ENCODE measurements at regions of chr20 and their contacts with region 1.

Region 1: DNA sequence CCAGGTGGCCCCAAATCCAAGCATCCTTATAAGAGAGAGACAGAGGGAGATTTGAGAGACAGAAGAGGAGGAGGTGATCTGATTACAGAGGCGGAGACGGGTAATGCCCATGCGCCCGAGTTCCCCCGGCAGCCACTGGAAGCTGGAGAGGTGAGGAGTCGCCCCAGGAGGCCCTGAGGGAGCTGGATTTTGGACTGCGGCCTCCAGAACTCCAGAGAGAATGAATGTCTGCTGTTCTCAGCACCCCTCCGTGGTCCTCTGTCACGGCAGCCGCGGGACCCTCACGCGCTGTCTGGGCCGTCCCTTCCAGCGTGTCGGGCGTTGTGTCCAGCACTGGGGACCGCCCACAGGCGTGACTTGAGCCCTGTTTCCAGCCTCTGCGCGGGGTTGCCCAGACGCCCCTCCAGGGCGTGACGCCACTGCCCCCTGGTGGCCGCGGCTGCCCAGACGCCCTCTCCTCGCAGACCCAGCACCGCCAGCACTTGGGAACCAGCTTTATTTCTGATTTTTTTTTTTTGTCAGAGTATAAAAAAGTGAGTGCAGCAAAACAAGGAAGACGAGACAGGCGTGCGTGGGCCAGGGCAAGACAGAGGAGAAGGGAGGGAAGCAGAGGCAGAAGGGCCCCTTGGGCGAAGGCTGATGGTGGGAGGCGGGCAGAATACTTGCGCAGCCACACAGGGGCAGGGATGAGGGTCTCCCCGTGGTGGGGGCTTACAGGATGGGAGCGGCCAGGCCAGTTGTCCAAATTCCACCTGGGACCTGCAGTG is 4.1 kb upstream of the ZNF512B start:
- DNase-seq: peak in 1 of 2 experiments; percentile 98
- H3K4me3 ChIP-seq: peak overlapping the region; percentile 18 to 61 (median 52); a peak in 7 of 8 replicates
- H3K27ac ChIP-seq: no peak overlapping the region
- H3K4me1 ChIP-seq: peaks cover 0 to 14% (median 8%) of the 10 kb centered on the region in 4 experiments; a peak in 6 of 7 replicates
- H3K27me3 ChIP-seq: peaks cover 0 to 12% (median 2%) of the 10 kb centered on the region in 4 experiments; a peak in 2 of 7 replicates
- CTCF ChIP-seq: peak; percentile 88 to 93 (median 89)
- EP300 ChIP-seq: no peak
- POLR2A ChIP-seq: no peak
- RAD21 ChIP-seq: peak; percentile 93 to 95

Region 2: GRCh38 chr20:63894358-63895201 is 79.2 kb before region 1 on chr20 and contains the start of gene DNAJC5:
- CTCF ChIA-PET with region 1: interaction called, 12 read pairs
- POLR2A ChIA-PET with region 1: no interaction called
- DNase-seq: peak; percentile 78 to 99
- H3K4me3 ChIP-seq: peak within 1 kb of the TSS; percentile 57 to 85 (median 60)
- H3K27ac ChIP-seq: no peak within 1 kb of the TSS
- H3K4me1 ChIP-seq: peaks cover 0 to 6% (median 4%) of the 10 kb centered on the region in 4 experiments; a peak in 4 of 7 replicates
- H3K27me3 ChIP-seq: no peaks in the 10 kb centered on the region
- CTCF ChIP-seq: no peak
- EP300 ChIP-seq: no peak; a peak in 1 of 3 replicates
- POLR2A ChIP-seq: peak in 1 of 2 experiments; percentile 45; a peak in 1 of 3 replicates
- RAD21 ChIP-seq: no peak
- total RNA-seq, gene DNAJC5: 31.2 and 32.8 TPM in 2 replicates

Region 3: DNA sequence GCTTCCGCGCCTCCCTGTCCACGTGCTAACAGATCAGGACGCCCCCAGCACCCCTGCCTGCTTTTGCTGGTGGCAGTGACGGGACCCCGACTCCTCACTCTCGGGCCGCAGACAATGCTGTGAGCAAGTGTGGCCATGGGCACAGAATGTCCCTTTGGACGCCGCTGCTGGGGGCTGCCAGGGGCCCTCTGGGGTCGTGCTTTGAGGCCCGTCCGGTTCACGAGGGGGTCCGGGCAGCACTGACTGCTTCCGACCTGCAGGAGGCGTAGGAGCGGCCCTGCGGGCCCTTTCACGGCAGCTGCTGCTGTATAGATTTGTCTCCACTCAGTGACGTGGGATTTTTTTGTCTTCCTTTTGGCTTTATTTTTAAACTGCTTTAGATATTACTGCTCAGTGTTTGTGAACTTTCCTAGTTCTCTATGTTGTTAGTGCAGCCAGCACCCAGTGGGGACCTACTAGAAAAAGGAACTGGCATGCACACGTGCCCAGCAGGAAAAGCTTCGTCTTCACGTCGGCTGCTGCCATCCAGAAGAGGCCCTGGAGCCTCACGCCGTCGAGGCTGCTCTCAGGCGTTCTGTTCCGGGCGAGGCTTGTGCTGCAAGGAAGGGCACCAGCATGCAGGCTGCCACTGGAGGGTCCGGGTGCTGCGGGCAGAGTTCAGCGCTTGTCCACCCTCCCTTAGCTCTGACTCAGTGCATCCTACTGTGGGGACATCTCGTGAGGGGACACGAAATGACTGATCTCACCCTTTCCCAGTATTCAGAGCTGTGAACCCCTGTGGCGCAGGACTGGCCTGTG is 39.3 kb before region 1 on chr20:
- CTCF ChIA-PET with region 1: interaction called, 58 read pairs
- POLR2A ChIA-PET with region 1: interaction called, 6 read pairs
- DNase-seq: peak in 1 of 2 experiments; percentile 80
- H3K4me3 ChIP-seq: no peak overlapping the region
- H3K27ac ChIP-seq: no peak overlapping the region
- H3K4me1 ChIP-seq: peaks cover 0 to 6% (median under 1%) of the 10 kb centered on the region in 4 experiments; a peak in 3 of 7 replicates
- H3K27me3 ChIP-seq: no peaks in the 10 kb centered on the region
- CTCF ChIP-seq: peak; percentile 61 to 79 (median 76)
- EP300 ChIP-seq: no peak
- POLR2A ChIP-seq: no peak
- RAD21 ChIP-seq: peak; percentile 42 to 52; a peak in 3 of 4 replicates

Region 4: DNA sequence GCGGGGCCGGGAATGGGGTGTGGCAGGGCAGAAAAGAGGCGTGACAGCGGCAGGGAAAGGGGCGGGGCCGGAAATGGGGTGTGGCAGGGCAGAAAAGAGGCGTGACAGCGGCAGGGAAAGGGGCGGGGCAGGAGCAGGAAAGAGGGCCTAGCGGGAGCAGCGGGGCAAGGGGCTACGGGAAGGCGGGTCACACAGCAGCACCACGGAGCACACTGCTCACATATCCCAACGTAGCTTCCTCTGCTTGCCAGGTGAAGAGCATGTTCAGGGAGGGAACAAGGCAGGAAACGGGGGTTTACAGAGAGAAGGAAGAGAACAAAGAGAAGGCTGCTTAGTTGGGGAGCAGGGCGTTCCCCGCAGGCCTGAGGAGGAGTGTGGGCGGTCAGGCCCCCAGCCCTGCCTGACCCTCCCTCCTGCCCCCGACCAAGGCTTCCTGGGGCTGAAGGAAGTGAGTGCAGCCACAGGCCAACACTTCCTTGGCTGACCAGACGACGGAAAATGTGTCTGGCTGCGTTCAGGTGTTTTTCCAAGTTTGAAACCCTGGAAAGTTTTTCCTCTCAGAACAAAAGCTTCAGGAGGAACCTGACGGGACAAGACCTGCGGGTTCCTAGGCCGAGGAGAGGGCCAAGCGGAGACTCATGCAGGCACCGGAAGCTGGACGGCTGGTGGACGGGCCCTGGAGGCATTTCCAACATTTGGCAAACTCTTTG is 31.4 kb before region 1 on chr20:
- CTCF ChIA-PET with region 1: interaction called, 58 read pairs
- POLR2A ChIA-PET with region 1: interaction called, 8 read pairs
- DNase-seq: peak; percentile 78 to 88
- H3K4me3 ChIP-seq: peak overlapping the region in 2 of 4 experiments; percentile 0 to 42; a peak in 5 of 8 replicates
- H3K27ac ChIP-seq: no peak overlapping the region
- H3K4me1 ChIP-seq: peaks cover 0 to 28% (median 13%) of the 10 kb centered on the region in 4 experiments; a peak in 6 of 7 replicates
- H3K27me3 ChIP-seq: no peaks in the 10 kb centered on the region
- CTCF ChIP-seq: no peak
- EP300 ChIP-seq: no peak
- POLR2A ChIP-seq: no peak
- RAD21 ChIP-seq: no peak

Region 5: DNA sequence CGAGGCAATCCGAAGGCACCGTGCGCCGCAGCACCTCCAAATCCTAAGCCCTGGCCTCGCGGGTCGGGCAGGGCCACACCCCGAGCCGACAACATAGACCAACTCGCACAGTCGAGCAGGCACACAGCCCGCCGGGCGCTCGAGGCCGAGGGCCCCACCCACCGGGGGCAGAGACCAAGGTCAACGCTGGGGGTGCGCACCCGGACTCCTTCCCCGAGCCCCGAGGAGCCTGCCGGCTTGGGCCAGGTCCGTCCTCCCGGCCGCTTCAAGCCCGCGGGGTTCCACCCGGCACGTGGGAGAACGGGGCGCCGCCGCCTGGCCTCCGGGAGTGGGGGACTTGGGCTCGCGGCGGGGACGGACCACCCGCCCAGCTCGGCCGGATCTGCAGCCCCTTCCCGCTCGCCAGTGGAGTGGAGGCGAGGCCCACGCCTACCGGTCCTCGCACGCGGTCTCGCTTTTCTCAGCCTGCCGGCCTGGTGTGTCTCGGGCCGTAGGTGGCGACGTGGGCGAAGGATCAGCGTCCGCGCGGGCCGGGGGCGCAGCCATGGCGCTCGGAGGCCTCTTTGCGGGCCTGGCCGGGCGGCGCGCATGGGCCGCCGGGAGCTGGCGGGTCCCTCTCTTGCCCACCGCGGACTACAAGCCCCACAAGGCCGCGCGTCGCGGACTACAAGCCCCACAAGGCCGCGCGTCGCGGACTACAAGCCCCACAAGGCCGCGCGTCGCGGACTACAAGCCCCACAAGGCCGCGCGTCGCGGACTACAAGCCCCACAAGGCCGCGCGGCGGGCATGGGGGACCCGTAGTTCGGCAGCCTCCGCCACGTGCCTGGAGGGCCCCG is 17.8 kb before region 1 on chr20 and contains the start of gene UCKL1:
- CTCF ChIA-PET with region 1: interaction called, 14 read pairs
- POLR2A ChIA-PET with region 1: interaction called, 11 read pairs
- DNase-seq: peak in 1 of 2 experiments; percentile 91
- H3K4me3 ChIP-seq: peak within 1 kb of the TSS; percentile 94 to 98 (median 96)
- H3K27ac ChIP-seq: peak within 1 kb of the TSS; percentile 69
- H3K4me1 ChIP-seq: peaks cover 0 to 19% (median 12%) of the 10 kb centered on the region in 4 experiments; a peak in 6 of 7 replicates
- H3K27me3 ChIP-seq: no peaks in the 10 kb centered on the region
- CTCF ChIP-seq: no peak
- EP300 ChIP-seq: no peak
- POLR2A ChIP-seq: peak in 1 of 2 experiments; percentile 84; a peak in 1 of 3 replicates
- RAD21 ChIP-seq: no peak
- total RNA-seq, gene UCKL1: 36.5 and 37.4 TPM in 2 replicates

Region 6: GRCh38 chr20:63962426-63963347 is 11.1 kb before region 1 on chr20:
- CTCF ChIA-PET with region 1: interaction called, 13 read pairs
- POLR2A ChIA-PET with region 1: interaction called, 11 read pairs
- DNase-seq: no peak
- H3K4me3 ChIP-seq: no peak overlapping the region
- H3K27ac ChIP-seq: no peak overlapping the region
- H3K4me1 ChIP-seq: peaks cover 0 to 19% (median 12%) of the 10 kb centered on the region in 4 experiments; a peak in 6 of 7 replicates
- H3K27me3 ChIP-seq: no peaks in the 10 kb centered on the region
- CTCF ChIP-seq: no peak
- EP300 ChIP-seq: no peak
- POLR2A ChIP-seq: no peak
- RAD21 ChIP-seq: no peak

Region 7: GRCh38 chr20:64030371-64031134 is 56.7 kb after region 1 on chr20:
- CTCF ChIA-PET with region 1: no interaction called
- POLR2A ChIA-PET with region 1: no interaction called
- DNase-seq: no peak
- H3K4me3 ChIP-seq: no peak overlapping the region
- H3K27ac ChIP-seq: no peak overlapping the region
- H3K4me1 ChIP-seq: peaks cover 0 to 2% (median under 1%) of the 10 kb centered on the region in 4 experiments; a peak in 2 of 7 replicates
- H3K27me3 ChIP-seq: no peaks in the 10 kb centered on the region
- CTCF ChIP-seq: no peak
- EP300 ChIP-seq: no peak
- POLR2A ChIP-seq: no peak
- RAD21 ChIP-seq: no peak

Region 8: GRCh38 chr20:64083378-64083803 is 109.6 kb after region 1 on chr20:
- CTCF ChIA-PET with region 1: no interaction called
- POLR2A ChIA-PET with region 1: no interaction called
- DNase-seq: peak in 1 of 2 experiments; percentile 87
- H3K4me3 ChIP-seq: peak overlapping the region; percentile 42 to 73 (median 52); a peak in 7 of 8 replicates
- H3K27ac ChIP-seq: no peak overlapping the region
- H3K4me1 ChIP-seq: peaks cover 0 to 33% (median 19%) of the 10 kb centered on the region in 4 experiments; a peak in 6 of 7 replicates
- H3K27me3 ChIP-seq: peaks cover 6 to 55% (median 42%) of the 10 kb centered on the region in 4 experiments
- CTCF ChIP-seq: peak; percentile 51 to 75 (median 70)
- EP300 ChIP-seq: no peak
- POLR2A ChIP-seq: no peak
- RAD21 ChIP-seq: peak; percentile 68 to 77